ENCODE measurements at regions of chr12 and their contacts with region 1.

Region 1: GRCh38 chr12:104108755-104109445 is 29.1 kb downstream of the NFYB start:
- DNase-seq: peak; percentile 54 to 83 (median 62)
- ATAC-seq: peak; percentile 95
- H3K4me3 ChIP-seq: no peak overlapping the region
- H3K27ac ChIP-seq: no peak overlapping the region
- H3K4me1 ChIP-seq: no peaks in the 10 kb centered on the region
- H3K27me3 ChIP-seq: no peaks in the 10 kb centered on the region
- CTCF ChIP-seq: peak; percentile 84 to 88 (median 86)
- EP300 ChIP-seq: no peak
- POLR2A ChIP-seq: no peak
- RAD21 ChIP-seq: peak; percentile 91 to 95

Region 2: GRCh38 chr12:103877934-103878510 is 230.9 kb before region 1 on chr12:
- CTCF ChIA-PET with region 1: interaction called, 12 read pairs
- POLR2A ChIA-PET with region 1: no interaction called
- in situ Hi-C with region 1: loop called (anchors 10 kb)
- intact Hi-C with region 1: loop called (anchors 1 kb)
- DNase-seq: peak; percentile 63 to 79 (median 70)
- ATAC-seq: peak; percentile 95
- H3K4me3 ChIP-seq: no peak overlapping the region
- H3K27ac ChIP-seq: no peak overlapping the region
- H3K4me1 ChIP-seq: no peaks in the 10 kb centered on the region
- H3K27me3 ChIP-seq: peaks cover 9 to 13% of the 10 kb centered on the region in 2 experiments; a peak in 3 of 5 replicates
- CTCF ChIP-seq: peak; percentile 70 to 82 (median 80)
- EP300 ChIP-seq: no peak
- POLR2A ChIP-seq: no peak
- RAD21 ChIP-seq: peak; percentile 70 to 83

Region 3: DNA sequence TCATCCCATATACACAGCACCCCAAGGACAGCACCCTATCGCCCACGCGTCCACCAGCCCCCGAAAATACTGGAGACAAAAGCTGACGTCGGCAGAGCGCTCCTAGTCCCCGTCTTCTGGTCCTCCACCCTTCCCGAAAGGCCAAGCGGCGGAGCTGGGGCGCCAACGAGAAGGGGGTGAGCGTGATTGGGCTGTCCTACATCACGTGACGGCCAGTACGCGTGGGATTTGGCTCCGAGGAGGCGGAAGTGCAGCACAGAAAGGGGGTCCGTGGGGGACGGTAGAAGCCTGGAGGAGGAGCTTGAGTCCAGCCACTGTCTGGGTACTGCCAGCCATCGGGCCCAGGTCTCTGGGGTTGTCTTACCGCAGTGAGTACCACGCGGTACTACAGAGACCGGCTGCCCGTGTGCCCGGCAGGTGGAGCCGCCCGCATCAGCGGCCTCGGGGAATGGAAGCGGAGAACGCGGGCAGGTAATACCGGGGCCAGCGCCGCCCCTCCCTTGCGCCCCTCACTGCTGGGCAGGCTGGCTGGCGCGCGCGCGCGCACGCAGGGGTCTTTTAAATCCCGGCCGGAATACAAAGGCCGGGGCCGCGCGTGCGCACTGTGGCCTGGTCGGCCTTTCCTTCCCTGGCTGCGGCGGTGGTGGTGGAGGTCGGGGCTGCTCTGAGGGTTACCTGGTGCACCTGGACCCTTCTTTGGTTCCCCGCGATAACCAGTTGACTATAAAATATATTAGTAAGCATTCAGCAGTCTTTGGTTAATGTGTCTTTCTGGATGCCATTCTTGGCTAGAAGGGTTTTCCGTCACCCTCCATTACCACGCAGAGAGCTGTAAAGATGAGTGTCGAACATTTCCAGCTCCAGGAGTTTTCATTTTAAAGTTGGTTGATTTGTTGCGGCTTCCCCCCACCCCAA is 143.1 kb before region 1 on chr12 and contains the start of gene TDG:
- CTCF ChIA-PET with region 1: no interaction called
- POLR2A ChIA-PET with region 1: interaction called, 6 read pairs
- in situ Hi-C with region 1: no loop called
- intact Hi-C with region 1: loop called (anchors 5 kb)
- DNase-seq: peak; percentile 92 to 99 (median 94)
- ATAC-seq: peak; percentile 94
- H3K4me3 ChIP-seq: peak within 1 kb of the TSS; percentile 69
- H3K27ac ChIP-seq: peak within 1 kb of the TSS; percentile 85
- H3K4me1 ChIP-seq: peaks cover 4 to 25% of the 10 kb centered on the region in 2 experiments; a peak in 4 of 5 replicates
- H3K27me3 ChIP-seq: no peaks in the 10 kb centered on the region
- CTCF ChIP-seq: 0 out of 6 replicates have a peak, but pooled peaks of 1 of the 3 experiments have one; percentile 13
- EP300 ChIP-seq: no peak; the same call in 1 of the 2 replicates
- POLR2A ChIP-seq: peak; percentile 96
- RAD21 ChIP-seq: peak in 1 of 2 experiments; percentile 15; a peak in 1 of 4 replicates
- polyA plus RNA-seq, gene TDG: 37.6 to 49.0 TPM

Region 4: DNA sequence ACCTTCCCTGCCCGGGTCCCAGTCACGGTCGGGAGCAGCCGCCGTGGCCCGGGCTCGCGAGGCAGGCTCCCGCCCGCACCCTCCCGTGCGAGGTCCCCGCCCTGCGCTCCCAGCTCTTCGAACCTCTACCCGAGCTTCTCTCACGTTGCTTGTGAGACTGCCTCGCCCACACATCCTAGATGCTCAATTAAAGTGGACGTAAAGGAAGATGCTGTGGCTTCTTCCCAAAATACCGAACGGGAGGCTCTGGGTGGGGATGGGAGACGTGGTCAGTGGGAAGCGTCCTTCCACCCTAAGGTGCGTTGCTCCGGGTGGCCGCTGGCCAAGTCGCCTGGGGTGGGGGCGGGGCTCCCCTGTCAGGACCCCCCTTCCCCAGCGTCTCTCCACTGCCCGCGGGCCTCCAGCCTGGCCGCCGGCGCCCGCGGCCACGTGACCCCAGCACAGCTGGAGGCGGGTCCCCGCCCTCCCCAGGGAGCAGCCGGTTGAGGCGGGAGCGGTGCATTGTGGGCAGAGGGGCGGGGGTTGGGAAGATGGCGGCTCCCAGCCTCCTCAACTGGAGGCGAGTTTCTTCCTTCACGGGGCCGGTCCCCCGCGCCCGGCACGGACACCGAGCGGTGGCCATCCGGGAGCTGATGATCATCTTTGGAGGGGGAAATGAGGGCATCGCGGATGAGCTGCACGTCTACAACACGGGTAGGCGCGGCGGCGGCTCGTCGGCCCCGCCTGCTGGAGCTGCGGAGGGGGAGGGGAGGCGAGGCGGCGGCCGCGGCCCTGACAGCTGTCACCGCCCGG is 44.7 kb before region 1 on chr12 and contains the start of gene HCFC2:
- CTCF ChIA-PET with region 1: interaction called, 3 read pairs
- POLR2A ChIA-PET with region 1: interaction called, 3 read pairs
- in situ Hi-C with region 1: no loop called
- intact Hi-C with region 1: loop called (anchors 2 kb)
- DNase-seq: peak; percentile 92 to 98 (median 98)
- ATAC-seq: peak; percentile 97
- H3K4me3 ChIP-seq: peak within 1 kb of the TSS; percentile 99
- H3K27ac ChIP-seq: peak within 1 kb of the TSS; percentile 67; the same call in 2 of the 3 replicates
- H3K4me1 ChIP-seq: peaks cover 5 to 15% of the 10 kb centered on the region in 2 experiments; a peak in 3 of 5 replicates
- H3K27me3 ChIP-seq: peaks cover 5 to 8% of the 10 kb centered on the region in 2 experiments; a peak in 1 of 5 replicates
- CTCF ChIP-seq: no peak
- EP300 ChIP-seq: 0 out of 2 replicates have a peak, but pooled peaks have one; percentile 3
- POLR2A ChIP-seq: peak; percentile 79
- RAD21 ChIP-seq: no peak
- polyA plus RNA-seq, gene HCFC2: 1.2 to 1.6 TPM